ENCODE measurements at regions of chr5 and their contacts with region 1.

Region 1: GRCh38 chr5:33440482-33441240 is at the start of gene TARS1:
- DNase-seq: peak; percentile 80 to 96 (median 92)
- ATAC-seq: peak; percentile 92
- H3K4me3 ChIP-seq: peak within 1 kb of the TSS; percentile 67 to 91
- H3K4me3 Mint-ChIP-seq: no peak within 1 kb of the TSS
- H3K27ac ChIP-seq: peak within 1 kb of the TSS; percentile 72 to 78
- H3K27ac Mint-ChIP-seq: no peak within 1 kb of the TSS
- H3K4me1 ChIP-seq: peaks cover 31% of the 10 kb centered on the region
- H3K4me1 Mint-ChIP-seq: peaks cover 35% of the 10 kb centered on the region
- H3K27me3 ChIP-seq: no peaks in the 10 kb centered on the region
- H3K27me3 Mint-ChIP-seq: no peaks in the 10 kb centered on the region
- CTCF ChIP-seq: no peak
- total RNA-seq, gene TARS1: 27.9 to 31.4 TPM

Region 2: GRCh38 chr5:32312647-32313523 is 1127.8 kb before region 1 on chr5 and contains the start of gene MTMR12:
- CTCF ChIA-PET with region 1: no interaction called
- POLR2A ChIA-PET with region 1: no interaction called
- intact Hi-C with region 1: loop called (anchors 2 to 5 kb)
- DNase-seq: peak; percentile 99 to 100 (median 100)
- ATAC-seq: peak; percentile 89
- H3K4me3 ChIP-seq: peak within 1 kb of the TSS; percentile 69 to 83
- H3K4me3 Mint-ChIP-seq: peak within 1 kb of the TSS; percentile 89
- H3K27ac ChIP-seq: peak within 1 kb of the TSS; percentile 87 to 89
- H3K27ac Mint-ChIP-seq: peak within 1 kb of the TSS; percentile 93
- H3K4me1 ChIP-seq: peaks cover 22% of the 10 kb centered on the region
- H3K4me1 Mint-ChIP-seq: peaks cover 39% of the 10 kb centered on the region
- H3K27me3 ChIP-seq: no peaks in the 10 kb centered on the region
- H3K27me3 Mint-ChIP-seq: no peaks in the 10 kb centered on the region
- CTCF ChIP-seq: no peak
- total RNA-seq, gene MTMR12: 20.0 to 21.2 TPM

Region 3: DNA sequence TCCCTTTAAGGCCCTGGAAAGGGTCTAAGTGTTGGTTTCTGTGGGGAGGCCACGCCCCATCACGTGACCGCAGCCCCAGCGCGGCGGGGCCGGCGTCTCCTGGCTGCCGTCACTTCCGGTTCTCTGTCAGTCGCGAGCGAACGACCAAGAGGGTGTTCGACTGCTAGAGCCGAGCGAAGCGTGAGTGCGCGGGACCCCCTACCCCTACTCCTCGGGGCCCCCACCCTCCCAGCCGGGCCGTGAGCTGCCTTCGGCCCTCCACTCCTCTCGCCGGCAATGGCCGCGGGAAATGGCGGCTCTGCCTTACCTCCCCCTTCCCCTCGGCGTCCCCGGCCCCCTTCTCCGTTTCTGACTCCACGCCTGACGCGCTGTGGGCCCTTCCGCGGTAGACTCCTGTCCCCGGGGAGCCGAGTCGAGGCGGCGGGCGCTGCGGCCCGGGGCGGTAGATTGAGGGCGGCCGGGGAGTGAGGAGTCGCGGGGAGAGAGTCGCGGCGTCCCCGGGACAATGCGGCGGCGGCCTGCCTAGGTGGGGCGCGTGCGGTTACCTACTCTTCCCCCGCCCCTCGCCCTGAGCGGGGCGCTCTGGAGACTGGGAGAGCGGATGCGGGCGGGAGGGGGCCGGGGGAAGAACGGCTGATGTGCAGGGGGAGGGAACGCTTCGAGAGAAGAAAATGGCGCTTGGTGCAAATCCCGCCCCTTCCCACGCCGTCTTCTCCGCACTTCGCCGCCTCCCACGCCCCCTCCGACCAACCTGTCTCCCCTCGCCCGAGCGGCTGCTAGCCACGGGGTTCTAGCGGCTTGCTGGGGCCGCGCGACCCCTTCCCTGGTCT is 855.0 kb before region 1 on chr5 and contains the start of gene SUB1:
- CTCF ChIA-PET with region 1: no interaction called
- POLR2A ChIA-PET with region 1: no interaction called
- intact Hi-C with region 1: loop called in 1 of 2 experiments (anchors 5 kb)
- DNase-seq: peak; percentile 89 to 97 (median 95)
- ATAC-seq: peak; percentile 90
- H3K4me3 ChIP-seq: peak within 1 kb of the TSS; percentile 94 to 97
- H3K4me3 Mint-ChIP-seq: peak within 1 kb of the TSS; percentile 96
- H3K27ac ChIP-seq: peak within 1 kb of the TSS; percentile 100
- H3K27ac Mint-ChIP-seq: peak within 1 kb of the TSS; percentile 95
- H3K4me1 ChIP-seq: peaks cover 29% of the 10 kb centered on the region
- H3K4me1 Mint-ChIP-seq: peaks cover 54% of the 10 kb centered on the region
- H3K27me3 ChIP-seq: no peaks in the 10 kb centered on the region
- H3K27me3 Mint-ChIP-seq: no peaks in the 10 kb centered on the region
- CTCF ChIP-seq: no peak
- total RNA-seq, gene SUB1: 361 to 370 TPM

Region 4: GRCh38 chr5:33457126-33457525 is 16.5 kb after region 1 on chr5:
- CTCF ChIA-PET with region 1: no interaction called
- POLR2A ChIA-PET with region 1: no interaction called
- intact Hi-C with region 1: loop called in 1 of 2 experiments (anchors 2 kb)
- DNase-seq: no peak
- ATAC-seq: no peak
- H3K4me3 ChIP-seq: no peak overlapping the region
- H3K4me3 Mint-ChIP-seq: no peak overlapping the region
- H3K27ac ChIP-seq: no peak overlapping the region
- H3K27ac Mint-ChIP-seq: no peak overlapping the region
- H3K4me1 ChIP-seq: no peaks in the 10 kb centered on the region
- H3K4me1 Mint-ChIP-seq: peaks cover 3% of the 10 kb centered on the region
- H3K27me3 ChIP-seq: no peaks in the 10 kb centered on the region
- H3K27me3 Mint-ChIP-seq: no peaks in the 10 kb centered on the region
- CTCF ChIP-seq: no peak

Region 5: GRCh38 chr5:33936004-33936380 is 495.3 kb after region 1 on chr5:
- CTCF ChIA-PET with region 1: interaction called, 16 read pairs
- POLR2A ChIA-PET with region 1: no interaction called
- intact Hi-C with region 1: loop called (anchors 1 kb)
- DNase-seq: peak in 7 of 9 experiments; percentile 4 to 46 (median 38)
- ATAC-seq: peak; percentile 57
- H3K4me3 ChIP-seq: no peak overlapping the region
- H3K4me3 Mint-ChIP-seq: no peak overlapping the region
- H3K27ac ChIP-seq: no peak overlapping the region
- H3K27ac Mint-ChIP-seq: no peak overlapping the region
- H3K4me1 ChIP-seq: no peaks in the 10 kb centered on the region
- H3K4me1 Mint-ChIP-seq: no peaks in the 10 kb centered on the region
- H3K27me3 ChIP-seq: peaks cover 4 to 5% of the 10 kb centered on the region in 2 experiments
- H3K27me3 Mint-ChIP-seq: peaks cover 45% of the 10 kb centered on the region
- CTCF ChIP-seq: no peak

Region 6: GRCh38 chr5:34007621-34008600 is 567.2 kb after region 1 on chr5 and contains the start of gene AMACR:
- CTCF ChIA-PET with region 1: no interaction called
- POLR2A ChIA-PET with region 1: interaction called, 5 read pairs
- intact Hi-C with region 1: loop called (anchors 1 to 2 kb)
- DNase-seq: peak; percentile 58 to 95 (median 89)
- ATAC-seq: peak; percentile 83
- H3K4me3 ChIP-seq: peak within 1 kb of the TSS; percentile 72 to 76
- H3K4me3 Mint-ChIP-seq: peak within 1 kb of the TSS; percentile 97
- H3K27ac ChIP-seq: peak within 1 kb of the TSS; percentile 67 to 78
- H3K27ac Mint-ChIP-seq: peak within 1 kb of the TSS; percentile 94
- H3K4me1 ChIP-seq: peaks cover 16% of the 10 kb centered on the region
- H3K4me1 Mint-ChIP-seq: peaks cover 21% of the 10 kb centered on the region
- H3K27me3 ChIP-seq: no peaks in the 10 kb centered on the region
- H3K27me3 Mint-ChIP-seq: no peaks in the 10 kb centered on the region
- CTCF ChIP-seq: no peak
- total RNA-seq, gene AMACR: 1.2 to 1.5 TPM

Region 7: DNA sequence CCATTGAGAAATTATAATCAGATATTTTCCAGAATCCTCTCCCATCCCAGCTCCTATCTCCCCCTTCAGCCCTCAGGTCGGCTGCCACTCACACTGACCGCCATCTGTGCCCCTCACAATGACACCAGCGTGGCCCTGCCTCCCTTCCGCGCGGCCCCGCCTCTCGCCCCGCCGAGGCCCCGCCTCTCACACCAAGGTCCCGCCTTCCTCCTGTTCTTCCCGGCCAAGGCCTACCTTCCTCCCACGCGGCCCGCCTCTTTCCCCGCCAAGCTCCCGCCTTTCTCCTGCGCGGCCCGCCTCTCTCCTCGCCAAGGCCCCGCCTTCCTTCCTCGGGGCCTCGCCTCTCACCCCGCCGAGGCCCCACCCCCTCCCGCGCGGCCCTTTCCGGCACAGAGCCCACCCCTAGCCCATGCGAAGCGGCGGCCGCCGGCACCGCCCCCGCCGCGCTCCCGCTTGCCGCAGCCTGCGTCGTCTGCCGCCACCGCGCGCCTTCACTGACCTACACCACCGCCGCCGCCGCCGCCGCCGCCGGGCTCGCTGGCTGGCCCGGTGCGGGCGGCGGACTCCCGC is 1488.6 kb after region 1 on chr5 and contains the start of gene DNAJC21:
- CTCF ChIA-PET with region 1: no interaction called
- POLR2A ChIA-PET with region 1: no interaction called
- intact Hi-C with region 1: loop called (anchors 2 to 5 kb)
- DNase-seq: peak; percentile 94 to 99 (median 96)
- ATAC-seq: peak; percentile 90
- H3K4me3 ChIP-seq: peak within 1 kb of the TSS; percentile 72 to 87
- H3K4me3 Mint-ChIP-seq: peak within 1 kb of the TSS; percentile 97
- H3K27ac ChIP-seq: peak within 1 kb of the TSS; percentile 72 to 83
- H3K27ac Mint-ChIP-seq: peak within 1 kb of the TSS; percentile 94
- H3K4me1 ChIP-seq: peaks cover 27% of the 10 kb centered on the region
- H3K4me1 Mint-ChIP-seq: peaks cover 37% of the 10 kb centered on the region
- H3K27me3 ChIP-seq: no peaks in the 10 kb centered on the region
- H3K27me3 Mint-ChIP-seq: no peaks in the 10 kb centered on the region
- CTCF ChIP-seq: no peak
- total RNA-seq, gene DNAJC21: 55.7 to 56.6 TPM